Naive thymus-derived CD4-positive, alpha-beta T cell (primary cell): ENCODE measurements at regions of chrX and their contacts with region 1.

Region 1: DNA sequence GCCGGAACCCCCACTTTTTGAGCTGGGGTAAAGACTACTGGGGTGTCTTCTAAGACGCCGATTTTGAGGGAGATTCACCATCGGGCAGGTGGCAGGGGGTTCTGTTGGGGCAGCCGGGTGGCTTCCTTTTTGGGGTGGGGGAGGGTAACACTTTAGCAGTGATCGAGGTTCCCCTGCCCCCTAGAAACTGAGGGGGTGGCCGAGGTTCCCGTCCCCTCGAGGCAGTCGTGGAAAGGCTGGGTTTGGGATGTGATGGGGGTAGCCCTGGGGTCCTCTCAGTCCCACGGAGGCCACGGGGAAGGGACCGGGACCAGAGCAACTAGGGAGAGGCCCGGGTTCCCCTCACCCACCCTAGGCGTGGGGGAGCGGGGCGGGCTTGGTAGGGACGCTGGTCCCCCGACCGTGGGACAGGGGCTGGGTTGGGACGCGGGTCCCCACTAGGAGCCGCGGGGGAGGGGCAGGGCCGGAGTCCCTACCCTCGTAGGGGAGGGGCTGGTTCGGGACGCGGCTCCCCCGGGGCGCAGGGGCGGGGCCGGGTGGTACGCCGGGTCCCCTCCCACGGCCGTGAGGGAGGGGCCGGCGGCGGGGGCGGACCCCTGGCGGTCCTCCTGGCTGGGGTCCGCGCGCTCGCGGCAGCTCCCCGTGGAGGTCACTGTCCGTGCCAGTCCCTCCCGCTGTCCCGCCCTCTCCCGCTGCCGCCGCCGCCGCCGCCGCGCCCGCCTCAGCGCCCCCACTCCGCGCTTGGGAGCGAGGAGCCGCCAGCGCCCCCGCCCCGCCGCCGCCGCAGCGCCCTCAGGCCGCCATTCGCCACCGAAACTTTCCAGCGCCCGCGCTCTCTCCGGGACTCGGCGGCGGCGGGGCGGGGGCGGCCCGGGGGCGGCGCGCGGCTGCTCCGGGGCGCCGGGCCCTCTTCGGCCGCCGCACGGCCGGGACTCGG is at the start of gene TBL1X:
- DNase-seq: peak; percentile 35 to 71 (median 43)
- ATAC-seq: peak; percentile 59
- H3K4me3 ChIP-seq: peak within 1 kb of the TSS; percentile 47
- H3K4me3 Mint-ChIP-seq: peak within 1 kb of the TSS; percentile 78 to 89 (median 86)
- H3K27ac ChIP-seq: peak within 1 kb of the TSS; percentile 86
- H3K27ac Mint-ChIP-seq: peak within 1 kb of the TSS; percentile 80 to 96 (median 89)
- H3K4me1 ChIP-seq: peaks cover 8 to 22% of the 10 kb centered on the region in 2 donors
- H3K4me1 Mint-ChIP-seq: peaks cover 24 to 66% (median 46%) of the 10 kb centered on the region in 7 donors
- H3K27me3 ChIP-seq: no peaks in the 10 kb centered on the region
- H3K27me3 Mint-ChIP-seq: peaks cover 0 to 3% (median 0%) of the 10 kb centered on the region in 5 donors
- total RNA-seq, gene TBL1X: 27.2 to 58.8 (median 29.4) TPM

Region 2: DNA sequence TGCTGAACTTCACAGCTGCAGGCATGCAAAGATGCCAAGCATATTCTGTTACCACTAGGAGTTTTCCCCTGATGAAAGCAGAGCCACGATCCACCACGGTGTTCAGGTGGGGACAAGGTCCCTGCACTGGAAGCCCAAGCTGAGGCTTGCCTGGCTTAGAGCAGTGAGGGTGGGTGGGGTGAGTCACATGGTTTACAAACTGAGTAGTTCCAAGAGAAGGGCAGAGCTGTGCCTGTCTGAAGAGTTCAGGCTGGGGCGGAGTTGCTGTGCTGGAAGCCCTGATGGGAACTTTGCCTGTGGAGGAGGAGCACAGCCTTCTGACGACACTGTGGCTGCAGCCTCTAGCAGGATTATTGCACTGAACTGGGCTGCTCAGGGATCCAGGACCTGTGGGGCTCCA is 476.3 kb before region 1 on chrX:
- CTCF ChIA-PET with region 1: no interaction called
- POLR2A ChIA-PET with region 1: interaction called, 4 read pairs
- intact Hi-C with region 1: loop called in 1 of 2 experiments (anchors 5 kb)
- DNase-seq: peak in 6 of 9 donors; percentile 11 to 25 (median 18)
- ATAC-seq: no peak
- H3K4me3 ChIP-seq: no peak overlapping the region
- H3K4me3 Mint-ChIP-seq: peak overlapping the region in 3 of 10 donors; percentile 52 to 78 (median 66)
- H3K27ac ChIP-seq: peak overlapping the region; percentile 10
- H3K27ac Mint-ChIP-seq: peak overlapping the region in 8 of 9 donors; percentile 84 to 99 (median 94)
- H3K4me1 ChIP-seq: peaks cover 3 to 21% of the 10 kb centered on the region in 2 donors
- H3K4me1 Mint-ChIP-seq: peaks cover 8 to 34% (median 27%) of the 10 kb centered on the region in 7 donors
- H3K27me3 ChIP-seq: no peaks in the 10 kb centered on the region
- H3K27me3 Mint-ChIP-seq: no peaks in the 10 kb centered on the region

Region 3: DNA sequence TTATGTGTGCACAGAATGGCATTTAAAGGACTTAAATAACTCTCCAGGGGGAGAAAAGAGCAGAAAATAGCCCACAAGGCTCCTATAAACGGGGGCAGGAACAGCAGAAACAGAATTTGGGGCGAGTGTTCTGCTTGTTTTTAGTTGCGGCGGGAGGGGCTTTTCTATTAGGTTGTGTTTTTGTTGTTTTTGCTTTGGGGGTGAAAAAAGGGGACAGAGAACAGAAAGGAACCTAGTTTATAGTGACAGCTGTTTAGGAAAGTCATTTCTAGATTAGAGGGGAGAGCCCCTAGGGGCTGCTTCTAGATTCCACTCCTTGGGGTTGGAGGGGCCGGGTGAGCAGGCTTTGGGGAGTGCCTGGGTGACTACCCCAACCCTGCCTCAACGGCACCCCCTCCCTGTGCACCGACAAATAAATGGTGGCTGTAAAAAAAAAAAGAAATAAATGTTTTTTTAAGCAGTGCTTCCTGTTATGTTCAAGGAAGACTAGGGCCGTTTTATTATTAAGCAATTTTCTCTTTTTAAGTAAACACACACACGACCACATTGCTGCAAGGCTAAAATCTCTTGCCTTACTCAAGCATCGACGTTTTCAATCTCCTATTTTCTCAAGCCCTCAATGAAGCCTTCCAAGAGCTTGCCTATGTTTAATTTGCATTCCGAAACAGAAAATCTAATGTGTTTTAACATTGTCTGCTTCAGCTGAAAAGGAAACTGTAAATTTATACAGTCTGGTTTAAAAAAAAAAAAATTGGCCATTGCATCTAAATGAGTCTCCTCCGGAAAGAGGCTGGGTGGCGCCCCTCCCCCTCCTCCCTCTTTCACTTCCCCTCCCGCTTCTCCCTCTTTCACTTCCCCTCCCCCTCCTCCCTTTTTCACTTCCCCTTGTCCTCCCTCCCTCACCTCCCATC is 123.2 kb before region 1 on chrX:
- CTCF ChIA-PET with region 1: interaction called, 5 read pairs
- POLR2A ChIA-PET with region 1: interaction called, 33 read pairs
- intact Hi-C with region 1: loop called (anchors 1 kb)
- DNase-seq: peak in 8 of 9 donors; percentile 46 to 74 (median 64)
- ATAC-seq: peak; percentile 70
- H3K4me3 ChIP-seq: peak overlapping the region; percentile 62
- H3K4me3 Mint-ChIP-seq: peak overlapping the region; percentile 70 to 88 (median 86)
- H3K27ac ChIP-seq: peak overlapping the region; percentile 74
- H3K27ac Mint-ChIP-seq: peak overlapping the region; percentile 94 to 98 (median 96)
- H3K4me1 ChIP-seq: peaks cover 9 to 27% of the 10 kb centered on the region in 2 donors
- H3K4me1 Mint-ChIP-seq: peaks cover 11 to 57% (median 35%) of the 10 kb centered on the region in 7 donors
- H3K27me3 ChIP-seq: no peaks in the 10 kb centered on the region
- H3K27me3 Mint-ChIP-seq: no peaks in the 10 kb centered on the region

Region 4: GRCh38 chrX:9566150-9566621 is 101.5 kb after region 1 on chrX:
- CTCF ChIA-PET with region 1: no interaction called
- POLR2A ChIA-PET with region 1: no interaction called
- intact Hi-C with region 1: loop called in 1 of 2 experiments (anchors 5 kb)
- DNase-seq: peak in 2 of 9 donors; percentile 5
- ATAC-seq: peak; percentile 26
- H3K4me3 ChIP-seq: peak overlapping the region; percentile 6
- H3K4me3 Mint-ChIP-seq: peak overlapping the region in 8 of 10 donors; percentile 56 to 74 (median 60)
- H3K27ac ChIP-seq: no peak overlapping the region
- H3K27ac Mint-ChIP-seq: peak overlapping the region in 8 of 9 donors; percentile 1 to 79 (median 61)
- H3K4me1 ChIP-seq: peaks cover 19 to 41% of the 10 kb centered on the region in 2 donors
- H3K4me1 Mint-ChIP-seq: peaks cover 3 to 50% (median 27%) of the 10 kb centered on the region in 7 donors
- H3K27me3 ChIP-seq: no peaks in the 10 kb centered on the region
- H3K27me3 Mint-ChIP-seq: no peaks in the 10 kb centered on the region

Region 5: GRCh38 chrX:9708904-9709553 is 244.3 kb after region 1 on chrX:
- CTCF ChIA-PET with region 1: no interaction called
- POLR2A ChIA-PET with region 1: no interaction called
- intact Hi-C with region 1: loop called (anchors 1 kb)
- DNase-seq: peak; percentile 62 to 84 (median 76)
- ATAC-seq: peak; percentile 95
- H3K4me3 ChIP-seq: no peak overlapping the region
- H3K4me3 Mint-ChIP-seq: peak overlapping the region in 4 of 10 donors; percentile 1 to 42 (median 16)
- H3K27ac ChIP-seq: no peak overlapping the region
- H3K27ac Mint-ChIP-seq: peak overlapping the region in 7 of 9 donors; percentile 7 to 84 (median 49)
- H3K4me1 ChIP-seq: peaks cover 0 to 5% of the 10 kb centered on the region in 2 donors
- H3K4me1 Mint-ChIP-seq: peaks cover 0 to 16% (median 10%) of the 10 kb centered on the region in 7 donors
- H3K27me3 ChIP-seq: no peaks in the 10 kb centered on the region
- H3K27me3 Mint-ChIP-seq: no peaks in the 10 kb centered on the region

Region 6: DNA sequence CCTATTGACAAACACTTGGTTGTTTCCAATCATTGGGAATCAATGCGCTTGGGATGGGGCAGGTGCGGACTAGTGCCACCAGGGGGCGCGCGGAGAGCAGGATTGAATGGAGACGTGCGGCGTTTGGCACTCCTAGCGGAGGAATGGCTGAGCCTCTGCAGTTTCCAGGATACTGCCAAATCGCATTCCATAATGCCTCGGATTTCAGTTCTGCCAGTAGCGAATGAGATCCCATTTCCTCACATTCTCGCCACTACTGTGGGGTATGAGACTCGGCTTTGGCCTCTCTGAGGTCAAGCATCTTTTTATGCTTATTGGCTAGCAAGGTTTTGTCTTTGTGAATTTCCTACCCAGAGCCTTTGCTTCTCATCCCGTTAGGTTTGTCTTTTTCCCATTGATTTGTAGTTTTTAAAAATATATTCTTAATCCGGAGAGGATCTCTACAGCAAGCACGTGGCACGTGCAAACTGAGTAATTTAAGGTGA is 531.2 kb after region 1 on chrX:
- CTCF ChIA-PET with region 1: no interaction called
- POLR2A ChIA-PET with region 1: no interaction called
- intact Hi-C with region 1: no loop called
- DNase-seq: peak; percentile 55 to 79 (median 67)
- ATAC-seq: peak; percentile 91
- H3K4me3 ChIP-seq: no peak overlapping the region
- H3K4me3 Mint-ChIP-seq: no peak overlapping the region
- H3K27ac ChIP-seq: no peak overlapping the region
- H3K27ac Mint-ChIP-seq: no peak overlapping the region
- H3K4me1 ChIP-seq: no peaks in the 10 kb centered on the region
- H3K4me1 Mint-ChIP-seq: peaks cover 0 to 17% (median 0%) of the 10 kb centered on the region in 7 donors
- H3K27me3 ChIP-seq: no peaks in the 10 kb centered on the region
- H3K27me3 Mint-ChIP-seq: no peaks in the 10 kb centered on the region